WTC11 (cell line): ENCODE measurements at regions of chr19 and their contacts with region 1.

Region 1: GRCh38 chr19:45059278-45059965 is 16.9 kb downstream of the ZNF296 start:
- DNase-seq: peak; percentile 96
- ATAC-seq: peak; percentile 88
- H3K4me3 Mint-ChIP-seq: no peak overlapping the region
- H3K27ac Mint-ChIP-seq: peak overlapping the region; percentile 85; the same call in 1 of the 2 replicates
- H3K4me1 Mint-ChIP-seq: peaks cover 3% of the 10 kb centered on the region; the same call in 1 of the 2 replicates
- H3K27me3 Mint-ChIP-seq: no peaks in the 10 kb centered on the region
- CTCF ChIP-seq: peak; percentile 95

Region 2: GRCh38 chr19:44988896-44989556 is 70.4 kb before region 1 on chr19:
- CTCF ChIA-PET with region 1: interaction called, 25 read pairs
- POLR2A ChIA-PET with region 1: no interaction called
- DNase-seq: peak; percentile 86
- ATAC-seq: peak; percentile 91
- H3K4me3 Mint-ChIP-seq: no peak overlapping the region
- H3K27ac Mint-ChIP-seq: no peak overlapping the region
- H3K4me1 Mint-ChIP-seq: no peaks in the 10 kb centered on the region
- H3K27me3 Mint-ChIP-seq: no peaks in the 10 kb centered on the region
- CTCF ChIP-seq: peak; percentile 73

Region 3: DNA sequence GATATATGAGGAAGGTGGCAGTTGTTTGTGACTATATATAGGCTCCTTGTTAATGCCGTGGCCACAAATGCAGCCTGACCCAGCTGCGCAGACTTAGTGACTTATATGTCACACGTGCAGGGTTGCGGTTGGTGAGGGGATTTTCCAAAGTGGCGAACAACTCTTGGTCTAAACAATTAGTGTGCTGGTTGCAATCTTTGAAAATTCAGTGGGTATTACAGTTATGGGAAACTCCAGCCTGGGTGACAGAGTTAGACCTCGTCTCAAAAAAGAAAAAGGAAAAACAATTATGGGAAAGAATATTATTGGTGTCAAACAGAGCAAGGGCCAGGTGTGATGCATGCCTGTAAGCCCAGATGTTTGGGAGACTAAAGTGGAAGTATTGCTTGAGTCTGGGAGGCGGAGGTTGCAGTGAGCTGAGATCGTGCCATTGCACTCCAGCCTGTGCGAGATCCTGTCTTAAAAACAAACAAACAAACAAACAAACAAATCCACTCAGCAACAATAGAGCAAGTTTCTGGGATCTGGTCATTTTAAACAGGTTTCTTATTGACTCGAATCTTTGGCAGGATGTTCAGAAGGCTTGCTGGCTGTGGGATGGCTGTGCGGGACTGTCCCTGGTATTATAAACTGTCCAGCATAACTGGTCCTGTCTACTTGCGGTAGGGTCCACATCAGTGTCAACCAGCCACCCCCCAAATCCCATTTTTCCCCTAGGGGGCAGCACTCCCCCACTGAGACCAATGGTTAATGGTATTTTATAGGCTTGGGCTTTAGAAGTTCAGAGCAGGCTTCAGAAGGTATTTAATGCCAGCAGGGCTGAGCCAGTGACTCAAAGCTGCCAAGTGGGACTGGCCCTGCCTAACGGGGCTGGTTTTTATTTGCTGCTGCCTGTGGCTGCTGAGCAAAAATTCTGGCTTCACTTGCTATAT is 42.8 kb before region 1 on chr19:
- CTCF ChIA-PET with region 1: interaction called, 16 read pairs
- POLR2A ChIA-PET with region 1: no interaction called
- DNase-seq: peak; percentile 87
- ATAC-seq: peak; percentile 96
- H3K4me3 Mint-ChIP-seq: no peak overlapping the region
- H3K27ac Mint-ChIP-seq: peak overlapping the region; percentile 49; the same call in 1 of the 2 replicates
- H3K4me1 Mint-ChIP-seq: peaks cover 8% of the 10 kb centered on the region
- H3K27me3 Mint-ChIP-seq: no peaks in the 10 kb centered on the region
- CTCF ChIP-seq: peak; percentile 54; the same call in 1 of the 2 replicates

Region 4: DNA sequence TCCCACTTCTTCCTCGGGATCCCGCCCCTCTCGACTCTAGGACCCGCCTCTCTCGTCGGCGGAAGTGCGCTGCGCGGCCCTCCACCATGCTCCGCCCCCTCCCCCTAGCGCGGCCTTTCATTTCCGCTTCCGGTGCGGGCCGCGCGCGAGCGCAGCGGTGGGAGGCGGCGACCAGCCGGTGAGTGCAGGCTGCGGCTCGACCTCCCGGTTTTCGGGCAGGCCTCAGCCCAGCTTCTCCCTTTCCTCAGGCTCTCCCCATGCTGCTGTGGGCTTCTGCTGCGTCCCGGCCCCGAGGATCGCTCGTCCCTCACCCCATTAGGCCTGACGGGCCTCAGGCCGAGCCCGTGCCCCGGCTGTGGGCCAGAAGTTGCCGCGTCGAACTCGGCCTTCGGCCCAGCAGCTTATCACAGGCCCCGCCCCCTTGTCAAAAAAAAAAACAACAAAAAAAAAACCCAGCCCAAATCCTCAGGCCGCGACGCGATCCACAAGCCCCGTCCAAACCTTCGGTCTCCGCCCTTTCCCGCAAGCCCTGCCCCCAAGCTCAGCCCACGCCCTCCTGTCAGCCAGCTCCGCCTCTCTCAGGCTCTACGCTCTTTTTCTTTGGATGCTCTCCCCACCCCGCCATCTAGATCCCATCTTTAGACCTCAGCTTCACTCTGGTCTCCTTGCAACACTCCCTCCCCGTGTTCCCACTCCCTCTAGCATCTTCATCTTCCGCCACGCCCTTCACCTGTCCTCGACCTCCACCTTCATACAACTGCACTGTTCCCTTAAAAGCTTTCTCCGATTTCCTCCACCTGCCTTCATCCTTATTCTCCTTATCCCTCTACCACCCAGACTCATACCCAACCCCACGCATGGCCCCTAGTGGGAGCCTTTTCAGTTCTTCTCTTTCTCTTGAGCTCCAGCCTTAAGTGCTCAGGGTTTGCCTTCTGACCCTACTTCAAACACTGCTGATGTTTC is 20.2 kb before region 1 on chr19 and contains the start of gene CLASRP:
- CTCF ChIA-PET with region 1: interaction called, 37 read pairs
- POLR2A ChIA-PET with region 1: interaction called, 4 read pairs
- DNase-seq: peak; percentile 89
- ATAC-seq: peak; percentile 92
- H3K4me3 Mint-ChIP-seq: peak within 1 kb of the TSS; percentile 98
- H3K27ac Mint-ChIP-seq: peak within 1 kb of the TSS; percentile 92
- H3K4me1 Mint-ChIP-seq: peaks cover 10% of the 10 kb centered on the region
- H3K27me3 Mint-ChIP-seq: no peaks in the 10 kb centered on the region
- CTCF ChIP-seq: no peak
- total RNA-seq, gene CLASRP: 85.0 to 88.9 TPM (median 88.0 TPM) in 3 replicates

Region 5: GRCh38 chr19:45079063-45079910 is 19.9 kb after region 1 on chr19 and contains the start of gene GEMIN7:
- CTCF ChIA-PET with region 1: interaction called, 24 read pairs
- POLR2A ChIA-PET with region 1: interaction called, 6 read pairs
- DNase-seq: peak; percentile 89
- ATAC-seq: peak; percentile 48
- H3K4me3 Mint-ChIP-seq: peak within 1 kb of the TSS; percentile 99
- H3K27ac Mint-ChIP-seq: peak within 1 kb of the TSS; percentile 99
- H3K4me1 Mint-ChIP-seq: peaks cover 52% of the 10 kb centered on the region
- H3K27me3 Mint-ChIP-seq: no peaks in the 10 kb centered on the region
- CTCF ChIP-seq: no peak
- total RNA-seq, gene GEMIN7: 55.0 to 60.3 TPM (median 55.3 TPM) in 3 replicates

Region 6: DNA sequence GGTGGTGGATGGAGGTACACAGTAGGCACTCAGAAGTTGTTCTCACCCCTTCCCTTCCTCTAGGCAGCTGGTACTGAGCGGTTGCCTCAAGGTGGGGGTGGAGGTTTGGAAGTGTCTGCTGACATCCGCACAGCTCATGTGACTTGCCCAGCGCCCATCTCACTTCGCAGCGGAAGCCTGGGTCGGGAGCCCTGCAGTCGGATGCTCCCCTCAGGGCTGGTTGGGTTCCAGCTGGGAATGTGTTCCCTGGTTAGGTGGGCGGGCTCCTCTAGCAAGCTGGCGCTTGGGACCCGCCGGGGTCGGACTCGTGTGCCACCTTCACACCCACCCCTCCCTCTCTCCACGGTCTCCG is 43.7 kb after region 1 on chr19:
- CTCF ChIA-PET with region 1: interaction called, 11 read pairs
- POLR2A ChIA-PET with region 1: no interaction called
- DNase-seq: no peak
- ATAC-seq: no peak
- H3K4me3 Mint-ChIP-seq: no peak overlapping the region
- H3K27ac Mint-ChIP-seq: no peak overlapping the region
- H3K4me1 Mint-ChIP-seq: peaks cover 42% of the 10 kb centered on the region
- H3K27me3 Mint-ChIP-seq: no peaks in the 10 kb centered on the region
- CTCF ChIP-seq: no peak

Region 7: GRCh38 chr19:45152504-45153338 is 93.3 kb after region 1 on chr19:
- CTCF ChIA-PET with region 1: interaction called, 10 read pairs
- POLR2A ChIA-PET with region 1: no interaction called
- DNase-seq: peak; percentile 75
- ATAC-seq: peak; percentile 23
- H3K4me3 Mint-ChIP-seq: peak overlapping the region; percentile 54
- H3K27ac Mint-ChIP-seq: no peak overlapping the region
- H3K4me1 Mint-ChIP-seq: peaks cover 15% of the 10 kb centered on the region
- H3K27me3 Mint-ChIP-seq: peaks cover 58% of the 10 kb centered on the region
- CTCF ChIP-seq: no peak